Right cardiac atrium (tissue), 5 donors: ENCODE measurements at regions of chr12 and their contacts with region 1.

Region 1: DNA sequence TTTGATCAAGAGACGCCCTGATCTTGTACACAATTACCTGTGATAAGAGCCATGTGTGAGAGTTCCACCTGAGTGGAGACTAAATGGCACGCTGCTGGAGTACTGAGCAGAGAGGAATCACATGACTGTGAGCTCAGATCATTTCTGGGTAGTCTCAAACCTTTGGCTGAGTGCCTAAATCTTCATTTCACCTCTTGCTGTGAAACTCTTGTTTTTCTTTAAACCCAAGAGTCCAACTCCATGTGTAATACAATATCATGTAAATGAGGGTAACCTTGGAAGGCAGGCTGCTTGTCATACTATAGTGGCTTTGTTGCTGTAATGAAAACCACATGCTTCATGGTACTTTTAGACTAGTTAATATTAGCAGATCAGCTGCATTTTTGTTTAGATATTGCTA is 156.9 kb downstream of the CAND1 start:
- DNase-seq: no peak
- ATAC-seq: no peak
- H3K4me3 ChIP-seq: no peak overlapping the region
- H3K27ac ChIP-seq: no peak overlapping the region
- H3K4me1 ChIP-seq: no peaks in the 10 kb centered on the region
- H3K27me3 ChIP-seq: no peaks in the 10 kb centered on the region

Region 2: GRCh38 chr12:67364228-67364627 is 61.8 kb before region 1 on chr12:
- intact Hi-C with region 1: loop called in 2 of 4 experiments (anchors 10 kb)
- DNase-seq: peak in 1 of 3 donors; percentile 52
- ATAC-seq: no peak
- H3K4me3 ChIP-seq: no peak overlapping the region
- H3K27ac ChIP-seq: no peak overlapping the region
- H3K4me1 ChIP-seq: no peaks in the 10 kb centered on the region
- H3K27me3 ChIP-seq: no peaks in the 10 kb centered on the region

Region 3: DNA sequence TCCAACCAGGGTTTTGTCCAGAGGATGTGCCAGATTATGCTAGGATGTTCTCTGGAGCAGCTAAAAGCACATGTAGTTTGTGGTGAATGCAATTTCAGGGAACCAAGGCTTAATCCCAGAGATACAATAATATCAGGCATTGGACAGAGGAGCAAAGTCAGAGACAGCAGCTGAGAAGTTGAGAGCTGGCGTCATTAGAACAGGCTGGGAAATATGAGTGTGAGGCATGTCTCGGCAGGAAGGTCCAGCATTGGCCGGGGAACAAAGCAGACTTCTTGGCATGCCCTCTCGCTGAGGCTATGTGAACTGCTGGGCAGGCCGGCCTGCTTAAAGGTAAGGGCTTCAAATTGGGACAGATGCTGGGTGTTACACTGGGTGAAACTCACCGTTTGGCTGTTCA is 31.5 kb before region 1 on chr12:
- intact Hi-C with region 1: no loop called
- DNase-seq: peak; percentile 64 to 84 (median 80)
- ATAC-seq: peak; percentile 93 to 94
- H3K4me3 ChIP-seq: no peak overlapping the region
- H3K27ac ChIP-seq: no peak overlapping the region
- H3K4me1 ChIP-seq: no peaks in the 10 kb centered on the region
- H3K27me3 ChIP-seq: no peaks in the 10 kb centered on the region

Region 4: DNA sequence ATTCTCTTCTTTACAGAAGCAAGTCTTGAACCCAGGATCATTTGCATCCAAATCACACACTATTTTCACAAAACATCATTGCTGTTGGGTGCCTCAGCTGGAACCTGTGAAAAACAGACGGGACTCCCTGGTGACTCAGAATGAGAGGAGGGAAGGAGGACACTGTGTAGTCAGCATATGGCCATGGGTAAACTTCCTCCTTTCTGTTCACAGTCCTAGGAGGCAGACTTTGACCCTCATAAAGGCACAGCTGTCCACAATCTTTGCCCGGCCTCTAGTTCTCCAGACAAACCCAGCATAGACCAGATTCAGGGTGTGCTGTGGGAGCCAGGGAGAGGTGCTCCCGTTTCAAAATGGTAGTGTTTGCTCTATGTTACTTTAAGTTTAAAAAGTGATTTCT is 284.5 kb after region 1 on chr12:
- intact Hi-C with region 1: no loop called
- DNase-seq: no peak
- ATAC-seq: peak; percentile 52 to 67
- H3K4me3 ChIP-seq: no peak overlapping the region
- H3K27ac ChIP-seq: no peak overlapping the region
- H3K4me1 ChIP-seq: peaks cover 6% of the 10 kb centered on the region
- H3K27me3 ChIP-seq: no peaks in the 10 kb centered on the region